ENCODE measurements at regions of chr21 and their contacts with region 1.

Region 1: DNA sequence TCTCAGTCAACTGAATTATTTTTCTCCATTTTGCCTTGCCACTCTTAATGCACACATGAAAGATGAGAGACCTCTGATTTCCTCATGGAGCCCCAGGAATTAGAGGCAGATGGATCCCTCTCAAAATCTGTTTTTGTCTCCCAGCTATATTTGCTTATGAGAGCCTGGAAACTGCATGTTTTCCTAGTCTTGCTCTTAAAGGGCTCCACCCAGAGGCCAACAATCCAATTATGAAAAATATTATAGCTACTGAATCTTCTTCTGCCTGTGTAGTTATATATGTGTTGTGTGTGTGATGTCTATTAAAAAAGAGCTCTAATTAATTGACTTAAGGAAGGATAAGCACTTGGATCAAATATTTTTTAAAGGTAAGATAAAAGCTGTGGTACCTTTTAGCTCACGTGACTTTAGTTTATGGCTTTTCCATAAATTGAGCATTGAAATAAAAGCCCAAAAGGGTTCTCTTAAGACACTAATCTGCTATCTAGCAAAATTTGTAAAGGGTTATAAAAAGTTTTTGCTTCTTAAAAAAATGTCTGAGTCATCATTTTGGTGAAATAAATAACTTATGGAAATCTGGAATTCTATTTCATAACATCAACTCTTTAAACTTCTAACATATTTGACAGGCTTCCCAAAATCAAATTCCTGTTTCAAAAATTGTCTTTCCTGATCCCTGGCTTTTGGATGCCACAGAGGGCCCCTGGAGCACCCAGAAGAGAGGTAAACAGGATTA is 31.2 kb upstream of the TSPEAR start:
- DNase-seq: peak; percentile 54
- ATAC-seq: peak; percentile 65
- H3K4me3 ChIP-seq: no peak overlapping the region
- H3K27ac ChIP-seq: no peak overlapping the region
- H3K4me1 ChIP-seq: no peaks in the 10 kb centered on the region
- H3K27me3 ChIP-seq: no peaks in the 10 kb centered on the region
- CTCF ChIP-seq: peak; percentile 65

Region 2: GRCh38 chr21:44510508-44511210 is 231.9 kb before region 1 on chr21:
- CTCF ChIA-PET with region 1: interaction called, 20 read pairs
- POLR2A ChIA-PET with region 1: no interaction called
- intact Hi-C with region 1: loop called (anchors 2 kb)
- DNase-seq: peak; percentile 88
- ATAC-seq: peak; percentile 83
- H3K4me3 ChIP-seq: peak overlapping the region; percentile 71
- H3K27ac ChIP-seq: no peak overlapping the region
- H3K4me1 ChIP-seq: peaks cover 11% of the 10 kb centered on the region; the same call in 1 of the 2 replicates
- H3K27me3 ChIP-seq: no peaks in the 10 kb centered on the region
- CTCF ChIP-seq: peak; percentile 97

Measured in PC-3 (cell line).